AG04450 (cell line): ENCODE measurements at regions of chr2 and their contacts with region 1.

Region 1: DNA sequence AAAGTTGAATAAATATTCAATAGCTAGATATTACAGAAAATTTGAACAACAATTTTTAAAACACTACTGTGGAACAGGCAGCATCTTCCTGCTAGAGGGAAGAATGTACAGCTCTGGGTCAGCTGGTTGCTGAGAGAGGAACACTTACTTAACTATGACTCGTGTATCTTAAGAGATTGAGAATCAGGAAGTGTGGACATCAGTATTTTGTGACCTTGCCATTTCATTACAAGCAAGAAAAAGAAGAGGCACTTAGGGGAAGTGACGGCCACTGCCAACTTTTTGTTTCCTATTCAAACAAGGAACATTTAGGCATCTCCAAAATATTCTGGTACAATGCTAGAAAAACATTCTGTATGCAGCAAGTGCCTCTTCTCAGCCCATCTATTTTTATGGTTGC is 45.9 kb downstream of the ITPRID2 start:
- DNase-seq: no peak
- H3K4me3 ChIP-seq: no peak overlapping the region
- H3K27ac ChIP-seq: no peak overlapping the region
- H3K27me3 ChIP-seq: no peaks in the 10 kb centered on the region
- CTCF ChIP-seq: no peak

Region 2: GRCh38 chr2:181924336-181924735 is 13.1 kb before region 1 on chr2:
- CTCF ChIA-PET with region 1: no interaction called
- POLR2A ChIA-PET with region 1: no interaction called
- DNase-seq: no peak
- H3K4me3 ChIP-seq: no peak overlapping the region
- H3K27ac ChIP-seq: no peak overlapping the region
- H3K27me3 ChIP-seq: no peaks in the 10 kb centered on the region
- CTCF ChIP-seq: no peak

Region 3: GRCh38 chr2:181953881-181954537 is 16.5 kb after region 1 on chr2:
- CTCF ChIA-PET with region 1: interaction called, 48 read pairs
- POLR2A ChIA-PET with region 1: no interaction called
- DNase-seq: no peak
- H3K4me3 ChIP-seq: no peak overlapping the region
- H3K27ac ChIP-seq: no peak overlapping the region
- H3K27me3 ChIP-seq: no peaks in the 10 kb centered on the region
- CTCF ChIP-seq: peak; percentile 65